ENCODE measurements at regions of chr7 and their contacts with region 1.

Region 1: GRCh38 chr7:147380926-147381325 is 1209.6 kb upstream of the C7orf33 start:
- DNase-seq: no peak
- H3K4me3 ChIP-seq: no peak overlapping the region
- H3K27ac ChIP-seq: no peak overlapping the region
- H3K4me1 ChIP-seq: no peaks in the 10 kb centered on the region
- H3K27me3 ChIP-seq: no peaks in the 10 kb centered on the region
- CTCF ChIP-seq: no peak
- POLR2A ChIP-seq: no peak

Region 2: GRCh38 chr7:147859033-147859432 is 478.1 kb after region 1 on chr7:
- intact Hi-C with region 1: loop called (anchors 5 kb)
- DNase-seq: no peak
- H3K4me3 ChIP-seq: no peak overlapping the region
- H3K27ac ChIP-seq: no peak overlapping the region
- H3K4me1 ChIP-seq: no peaks in the 10 kb centered on the region
- H3K27me3 ChIP-seq: no peaks in the 10 kb centered on the region
- CTCF ChIP-seq: no peak
- POLR2A ChIP-seq: no peak

Measured in breast epithelium (tissue), 4 donors.